Naive thymus-derived CD4-positive, alpha-beta T cell (primary cell): ENCODE measurements at regions of chr2 and their contacts with region 1.

Region 1: DNA sequence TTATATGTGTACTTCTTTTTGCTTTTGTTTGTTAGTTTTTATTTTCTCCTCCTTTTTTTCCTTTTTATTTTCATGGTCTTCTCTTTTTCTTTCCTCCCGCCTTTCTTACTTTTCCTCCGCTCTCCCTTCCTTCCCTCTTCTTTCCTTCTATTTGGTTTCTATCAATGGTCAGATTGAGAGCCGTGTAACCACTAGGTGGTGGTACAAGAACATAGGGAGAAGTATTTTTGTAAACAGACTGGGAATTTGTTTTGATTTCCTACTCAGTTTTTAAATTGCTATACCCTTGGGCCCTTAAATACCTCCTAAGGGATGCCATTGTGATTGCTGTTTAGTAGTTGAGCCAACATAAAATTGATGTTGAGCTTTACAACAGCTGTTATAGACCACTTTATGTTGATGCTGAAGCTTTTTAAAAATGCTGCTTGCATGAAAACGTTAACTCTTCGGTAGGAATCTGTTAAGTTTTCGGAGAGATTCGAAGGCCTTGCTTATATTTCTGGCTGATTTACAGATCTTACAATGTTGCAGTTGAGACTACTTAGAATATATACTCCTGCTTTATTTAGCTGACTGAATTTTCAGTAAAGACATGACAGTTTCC is 124.2 kb downstream of the UBE2E3 start:
- DNase-seq: peak in 7 of 9 donors; percentile 14 to 66 (median 54)
- ATAC-seq: peak; percentile 64
- H3K4me3 ChIP-seq: no peak overlapping the region
- H3K4me3 Mint-ChIP-seq: peak overlapping the region in 7 of 10 donors; percentile 0 to 27 (median 11)
- H3K27ac ChIP-seq: no peak overlapping the region
- H3K27ac Mint-ChIP-seq: peak overlapping the region in 7 of 9 donors; percentile 4 to 35 (median 27)
- H3K4me1 ChIP-seq: peaks cover 30 to 34% of the 10 kb centered on the region in 2 donors
- H3K4me1 Mint-ChIP-seq: peaks cover 11 to 48% (median 37%) of the 10 kb centered on the region in 7 donors
- H3K27me3 ChIP-seq: no peaks in the 10 kb centered on the region
- H3K27me3 Mint-ChIP-seq: peaks cover 0 to 4% (median 3%) of the 10 kb centered on the region in 5 donors

Region 2: DNA sequence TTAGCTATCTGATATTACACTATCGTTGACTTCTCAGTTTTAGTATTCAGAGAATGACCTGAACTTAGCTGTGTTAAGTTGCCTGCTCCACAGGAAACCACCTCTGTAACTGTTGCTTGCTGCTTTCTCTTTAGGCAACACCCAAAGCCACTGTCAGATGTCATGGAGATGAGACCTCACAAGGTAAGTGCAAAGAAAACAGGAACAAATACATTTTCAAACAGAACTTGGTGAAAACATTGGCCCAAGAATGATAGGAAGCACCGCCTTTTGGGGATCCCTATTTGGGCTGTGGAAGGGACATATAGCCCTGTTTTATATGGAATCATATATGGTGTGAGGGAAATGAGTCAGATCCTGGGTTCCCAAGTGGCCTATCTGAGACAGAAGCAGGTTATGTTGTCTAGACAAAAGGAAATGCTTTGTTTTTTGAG is 19.2 kb after region 1 on chr2:
- CTCF ChIA-PET with region 1: interaction called, 25 read pairs
- POLR2A ChIA-PET with region 1: interaction called, 10 read pairs
- intact Hi-C with region 1: loop called (anchors 1 kb)
- DNase-seq: peak in 8 of 9 donors; percentile 54 to 91 (median 83)
- ATAC-seq: peak; percentile 98
- H3K4me3 ChIP-seq: peak overlapping the region; percentile 37
- H3K4me3 Mint-ChIP-seq: peak overlapping the region; percentile 73 to 92 (median 82)
- H3K27ac ChIP-seq: peak overlapping the region; percentile 83
- H3K27ac Mint-ChIP-seq: peak overlapping the region; percentile 94 to 100 (median 98)
- H3K4me1 ChIP-seq: peaks cover 39 to 47% of the 10 kb centered on the region in 2 donors
- H3K4me1 Mint-ChIP-seq: peaks cover 27 to 81% (median 78%) of the 10 kb centered on the region in 7 donors
- H3K27me3 ChIP-seq: no peaks in the 10 kb centered on the region
- H3K27me3 Mint-ChIP-seq: no peaks in the 10 kb centered on the region

Region 3: GRCh38 chr2:181223234-181223633 is 118.6 kb after region 1 on chr2:
- CTCF ChIA-PET with region 1: no interaction called
- POLR2A ChIA-PET with region 1: interaction called, 3 read pairs
- intact Hi-C with region 1: loop called in 1 of 2 experiments (anchors 1 kb)
- DNase-seq: peak in 6 of 9 donors; percentile 13 to 54 (median 44)
- ATAC-seq: no peak
- H3K4me3 ChIP-seq: peak overlapping the region; percentile 0
- H3K4me3 Mint-ChIP-seq: peak overlapping the region in 9 of 10 donors; percentile 58 to 84 (median 66)
- H3K27ac ChIP-seq: peak overlapping the region; percentile 4
- H3K27ac Mint-ChIP-seq: peak overlapping the region; percentile 57 to 97 (median 88)
- H3K4me1 ChIP-seq: peaks cover 25% of the 10 kb centered on the region in 2 donors
- H3K4me1 Mint-ChIP-seq: peaks cover 7 to 64% (median 37%) of the 10 kb centered on the region in 7 donors
- H3K27me3 ChIP-seq: no peaks in the 10 kb centered on the region
- H3K27me3 Mint-ChIP-seq: no peaks in the 10 kb centered on the region

Region 4: DNA sequence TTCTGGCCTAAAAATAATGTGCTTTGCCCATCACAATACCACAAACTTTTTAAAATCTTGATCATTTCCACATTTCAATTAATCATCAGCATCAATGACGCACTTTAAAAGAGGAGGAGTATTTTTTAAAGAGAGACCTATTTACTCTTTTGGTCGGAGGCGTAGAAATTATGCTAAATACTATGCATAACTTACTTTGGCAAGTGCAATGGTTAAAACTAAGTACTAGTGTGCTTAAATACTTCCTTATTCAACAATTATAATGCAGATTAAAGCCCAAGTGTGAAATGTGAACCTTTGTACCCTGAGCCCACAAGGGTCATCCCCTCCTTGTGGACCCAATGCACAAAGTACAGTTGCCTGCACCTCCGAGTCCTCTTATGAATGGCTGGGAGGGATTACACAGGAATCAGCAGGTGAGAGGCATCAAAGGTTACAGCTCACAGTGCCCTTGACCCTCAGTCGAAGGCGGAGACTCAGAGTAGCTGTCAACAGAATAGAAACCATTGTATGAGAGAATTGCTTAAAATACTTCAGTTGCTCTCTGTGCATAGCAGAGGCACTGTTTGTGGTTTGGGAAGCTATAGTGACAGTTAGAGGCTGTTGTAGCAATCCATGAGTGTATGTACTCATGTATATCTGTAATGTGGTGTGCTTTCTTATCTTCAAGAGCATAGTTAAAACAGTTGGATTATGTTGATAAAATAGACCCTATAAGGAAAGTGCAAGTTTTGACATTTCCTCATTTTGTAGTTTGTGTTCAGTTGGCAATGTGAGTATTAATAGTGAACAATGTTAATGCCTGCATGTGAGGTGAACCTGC is 200.9 kb after region 1 on chr2:
- CTCF ChIA-PET with region 1: interaction called, 35 read pairs
- POLR2A ChIA-PET with region 1: interaction called, 6 read pairs
- intact Hi-C with region 1: loop called (anchors 1 kb)
- DNase-seq: peak in 5 of 9 donors; percentile 47 to 61 (median 54)
- ATAC-seq: peak; percentile 77
- H3K4me3 ChIP-seq: peak overlapping the region; percentile 14
- H3K4me3 Mint-ChIP-seq: peak overlapping the region; percentile 71 to 94 (median 82)
- H3K27ac ChIP-seq: peak overlapping the region; percentile 84
- H3K27ac Mint-ChIP-seq: peak overlapping the region; percentile 90 to 100 (median 95)
- H3K4me1 ChIP-seq: peaks cover 66 to 73% of the 10 kb centered on the region in 2 donors
- H3K4me1 Mint-ChIP-seq: peaks cover 49 to 90% (median 84%) of the 10 kb centered on the region in 7 donors
- H3K27me3 ChIP-seq: no peaks in the 10 kb centered on the region
- H3K27me3 Mint-ChIP-seq: no peaks in the 10 kb centered on the region

Region 5: GRCh38 chr2:181457121-181457740 is 352.6 kb after region 1 on chr2 and contains the start of gene ITGA4:
- CTCF ChIA-PET with region 1: interaction called, 26 read pairs
- POLR2A ChIA-PET with region 1: interaction called, 13 read pairs
- intact Hi-C with region 1: loop called (anchors 1 kb)
- DNase-seq: peak; percentile 77 to 89 (median 83)
- ATAC-seq: peak; percentile 92
- H3K4me3 ChIP-seq: peak within 1 kb of the TSS; percentile 91
- H3K4me3 Mint-ChIP-seq: peak within 1 kb of the TSS; percentile 89 to 99 (median 95)
- H3K27ac ChIP-seq: peak within 1 kb of the TSS; percentile 82
- H3K27ac Mint-ChIP-seq: peak within 1 kb of the TSS; percentile 81 to 98 (median 95)
- H3K4me1 ChIP-seq: peaks cover 13 to 24% of the 10 kb centered on the region in 2 donors
- H3K4me1 Mint-ChIP-seq: peaks cover 34 to 65% (median 54%) of the 10 kb centered on the region in 7 donors
- H3K27me3 ChIP-seq: no peaks in the 10 kb centered on the region
- H3K27me3 Mint-ChIP-seq: no peaks in the 10 kb centered on the region
- total RNA-seq, gene ITGA4: 135 to 212 (median 159) TPM

Region 6: GRCh38 chr2:181904022-181904632 is 799.5 kb after region 1 on chr2:
- CTCF ChIA-PET with region 1: no interaction called
- POLR2A ChIA-PET with region 1: no interaction called
- intact Hi-C with region 1: loop called in 1 of 2 experiments (anchors 1 kb)
- DNase-seq: peak in 6 of 9 donors; percentile 19 to 50 (median 40)
- ATAC-seq: peak; percentile 66
- H3K4me3 ChIP-seq: no peak overlapping the region
- H3K4me3 Mint-ChIP-seq: no peak overlapping the region
- H3K27ac ChIP-seq: no peak overlapping the region
- H3K27ac Mint-ChIP-seq: no peak overlapping the region
- H3K4me1 ChIP-seq: peaks cover 0 to 6% of the 10 kb centered on the region in 2 donors
- H3K4me1 Mint-ChIP-seq: peaks cover 9 to 41% (median 25%) of the 10 kb centered on the region in 7 donors
- H3K27me3 ChIP-seq: no peaks in the 10 kb centered on the region
- H3K27me3 Mint-ChIP-seq: no peaks in the 10 kb centered on the region